B cell (primary cell): ENCODE measurements at regions of chr4 and their contacts with region 1.

Region 1: GRCh38 chr4:6355052-6355451 is 85.4 kb downstream of the WFS1 start:
- DNase-seq: no peak
- ATAC-seq: no peak
- H3K4me3 ChIP-seq: no peak overlapping the region
- H3K4me3 Mint-ChIP-seq: no peak overlapping the region
- H3K27ac ChIP-seq: no peak overlapping the region
- H3K27ac Mint-ChIP-seq: no peak overlapping the region
- H3K4me1 ChIP-seq: no peaks in the 10 kb centered on the region
- H3K4me1 Mint-ChIP-seq: no peaks in the 10 kb centered on the region
- H3K27me3 ChIP-seq: peaks cover 0 to 2% (median 0%) of the 10 kb centered on the region in 4 experiments
- H3K27me3 Mint-ChIP-seq: peaks cover 13% of the 10 kb centered on the region
- CTCF ChIP-seq: no peak

Region 2: GRCh38 chr4:6172093-6172926 is 182.7 kb before region 1 on chr4:
- CTCF ChIA-PET with region 1: no interaction called
- POLR2A ChIA-PET with region 1: interaction called, 11 read pairs
- intact Hi-C with region 1: no loop called
- DNase-seq: no peak
- ATAC-seq: no peak
- H3K4me3 ChIP-seq: no peak overlapping the region
- H3K4me3 Mint-ChIP-seq: no peak overlapping the region
- H3K27ac ChIP-seq: no peak overlapping the region
- H3K27ac Mint-ChIP-seq: no peak overlapping the region
- H3K4me1 ChIP-seq: no peaks in the 10 kb centered on the region
- H3K4me1 Mint-ChIP-seq: no peaks in the 10 kb centered on the region
- H3K27me3 ChIP-seq: no peaks in the 10 kb centered on the region
- H3K27me3 Mint-ChIP-seq: no peaks in the 10 kb centered on the region
- CTCF ChIP-seq: no peak

Region 3: GRCh38 chr4:6372649-6373525 is 17.8 kb after region 1 on chr4:
- CTCF ChIA-PET with region 1: no interaction called
- POLR2A ChIA-PET with region 1: no interaction called
- intact Hi-C with region 1: no loop called
- DNase-seq: peak; percentile 28
- ATAC-seq: no peak
- H3K4me3 ChIP-seq: no peak overlapping the region
- H3K4me3 Mint-ChIP-seq: no peak overlapping the region
- H3K27ac ChIP-seq: no peak overlapping the region
- H3K27ac Mint-ChIP-seq: no peak overlapping the region
- H3K4me1 ChIP-seq: no peaks in the 10 kb centered on the region
- H3K4me1 Mint-ChIP-seq: no peaks in the 10 kb centered on the region
- H3K27me3 ChIP-seq: no peaks in the 10 kb centered on the region
- H3K27me3 Mint-ChIP-seq: peaks cover 14% of the 10 kb centered on the region
- CTCF ChIP-seq: no peak